ENCODE measurements at regions of chr2 and their contacts with region 1.

Region 1: DNA sequence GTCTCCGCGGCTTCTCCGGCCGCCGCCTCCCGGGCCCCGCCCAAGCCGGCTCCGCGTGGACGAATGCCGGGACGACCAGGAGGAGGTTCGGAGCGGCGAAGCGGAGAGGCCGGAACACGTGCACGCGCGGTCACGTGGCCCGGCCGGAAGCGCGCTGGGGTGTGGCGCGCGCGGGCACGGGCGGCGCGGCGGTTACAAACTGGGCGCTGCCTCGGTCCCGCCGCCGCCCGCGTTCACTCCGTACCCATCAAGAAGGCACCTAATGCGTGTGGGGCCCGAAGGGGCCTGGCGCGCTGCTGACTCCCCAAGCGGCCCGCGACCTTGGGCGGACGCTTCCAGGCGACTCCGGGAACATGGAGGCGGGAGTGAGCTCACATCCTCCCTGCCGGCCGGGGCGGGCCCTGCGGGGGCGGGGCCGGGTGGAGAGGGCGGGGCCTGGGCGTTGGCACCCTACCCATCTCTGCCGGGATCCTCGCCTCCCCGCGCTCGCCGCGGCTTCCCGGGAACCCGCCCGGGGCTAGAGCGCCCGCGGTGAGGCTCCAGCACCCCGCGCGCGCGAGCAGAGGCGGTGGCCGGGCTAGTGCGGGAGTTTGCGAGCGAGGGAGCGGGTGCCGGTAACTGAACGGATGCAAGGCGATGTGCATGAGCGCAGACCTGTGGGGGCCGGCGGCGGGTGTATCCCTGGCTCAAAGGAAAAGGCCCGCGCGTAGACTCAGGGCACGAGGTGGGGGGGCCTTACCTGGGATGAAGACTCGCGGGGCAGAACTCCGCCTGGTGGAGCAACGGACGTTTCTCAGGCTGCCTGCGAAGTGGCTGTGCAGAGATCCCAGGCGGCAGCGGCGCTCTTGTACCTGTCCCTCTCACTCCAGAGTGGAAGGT is at the start of gene TMEM185B:
- DNase-seq: peak; percentile 59
- ATAC-seq: peak; percentile 81
- H3K4me3 ChIP-seq: peak within 1 kb of the TSS; percentile 61 to 81 (median 70)
- H3K27ac ChIP-seq: peak within 1 kb of the TSS; percentile 14
- H3K4me1 ChIP-seq: peaks cover 62% of the 10 kb centered on the region
- H3K27me3 ChIP-seq: peaks cover 14 to 38% of the 10 kb centered on the region in 2 experiments; a peak in 4 of 5 replicates
- CTCF ChIP-seq: peak; percentile 71
- EP300 ChIP-seq: no peak
- POLR2A ChIP-seq: peak; percentile 61 to 69; a peak in 3 of 4 replicates
- RAD21 ChIP-seq: peak; percentile 74
- total RNA-seq, gene TMEM185B: 3.5 and 7.0 TPM in 2 replicates

Region 2: DNA sequence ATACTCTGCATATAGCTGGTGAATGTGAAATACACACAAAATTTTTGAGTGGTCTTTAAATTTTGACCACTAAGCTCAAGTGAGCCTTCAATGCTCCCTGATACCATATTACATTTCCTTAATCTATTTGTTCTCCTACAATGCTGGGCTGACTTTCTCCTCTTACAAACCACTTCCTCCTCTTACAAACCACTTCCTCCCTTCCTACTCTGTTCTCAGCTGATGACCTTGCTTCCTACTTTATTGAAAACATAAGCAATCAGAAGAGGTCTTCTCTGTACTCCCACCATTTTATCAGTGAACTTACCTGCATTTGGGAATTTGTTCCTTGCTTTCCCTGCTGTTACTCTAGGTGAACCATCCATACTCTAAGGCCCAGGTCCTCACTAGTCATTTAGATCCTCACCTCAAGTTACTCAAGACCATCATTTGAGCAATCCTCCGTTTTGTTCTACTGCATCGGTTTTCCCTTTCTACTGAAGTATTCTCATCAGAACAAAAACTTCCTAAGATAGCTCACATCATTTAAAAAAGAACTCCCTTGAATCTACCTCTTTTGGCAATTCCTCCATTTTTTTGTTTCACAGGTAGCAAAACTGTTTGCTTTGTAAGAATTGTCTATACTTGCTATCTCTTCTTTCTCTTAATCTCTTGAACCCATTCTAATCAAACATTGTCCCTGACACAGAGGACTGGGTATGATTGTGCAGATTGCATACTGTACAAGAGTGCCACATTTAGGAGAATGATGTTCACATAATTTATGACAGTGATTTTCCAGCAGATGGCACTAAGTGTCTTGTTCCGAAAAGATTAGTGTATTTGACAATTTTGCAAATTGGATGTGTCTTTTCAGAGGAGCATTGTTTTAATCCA is 113.8 kb before region 1 on chr2:
- CTCF ChIA-PET with region 1: no interaction called
- POLR2A ChIA-PET with region 1: no interaction called
- in situ Hi-C with region 1: no loop called
- intact Hi-C with region 1: loop called (anchors 1 kb)
- DNase-seq: peak; percentile 55
- ATAC-seq: peak; percentile 83
- H3K4me3 ChIP-seq: no peak overlapping the region
- H3K27ac ChIP-seq: no peak overlapping the region
- H3K4me1 ChIP-seq: peaks cover 6% of the 10 kb centered on the region; the same call in 1 of the 2 replicates
- H3K27me3 ChIP-seq: no peaks in the 10 kb centered on the region
- CTCF ChIP-seq: peak; percentile 73
- EP300 ChIP-seq: no peak
- POLR2A ChIP-seq: no peak
- RAD21 ChIP-seq: peak; percentile 37; the same call in 1 of the 2 replicates

Region 3: DNA sequence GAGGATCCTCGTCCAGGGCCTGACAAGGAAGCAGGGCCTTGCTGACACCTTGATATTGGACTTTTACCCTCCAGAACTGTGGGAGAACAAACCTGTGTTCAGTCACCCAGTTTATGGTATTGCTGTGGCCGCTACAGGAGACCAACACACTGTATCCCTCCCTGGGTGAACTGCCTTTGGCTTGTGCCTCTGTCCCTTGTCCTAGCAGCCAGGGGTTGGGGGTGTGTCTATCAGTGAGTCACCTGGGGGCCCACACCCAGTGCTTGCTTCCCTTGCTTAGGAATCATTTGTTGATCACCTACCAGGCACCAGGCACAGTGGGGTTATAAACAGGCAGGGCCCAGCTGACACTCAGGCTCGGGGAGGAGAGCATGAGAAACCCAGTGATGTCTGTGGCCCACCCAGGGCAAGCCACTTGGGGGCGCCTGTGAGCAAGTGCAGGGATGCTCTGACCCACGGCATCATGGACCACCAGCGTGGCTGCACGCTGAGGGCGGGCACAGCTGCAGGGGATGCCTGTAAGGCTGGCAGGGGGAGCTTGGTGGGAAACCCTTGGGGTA is 17.2 kb before region 1 on chr2:
- CTCF ChIA-PET with region 1: no interaction called
- POLR2A ChIA-PET with region 1: no interaction called
- in situ Hi-C with region 1: no loop called
- intact Hi-C with region 1: loop called (anchors 2 kb)
- DNase-seq: no peak
- ATAC-seq: peak; percentile 40
- H3K4me3 ChIP-seq: no peak overlapping the region
- H3K27ac ChIP-seq: no peak overlapping the region
- H3K4me1 ChIP-seq: peaks cover 25% of the 10 kb centered on the region
- H3K27me3 ChIP-seq: peaks cover 2 to 26% of the 10 kb centered on the region in 2 experiments; a peak in 3 of 5 replicates
- CTCF ChIP-seq: peak; percentile 86
- EP300 ChIP-seq: no peak
- POLR2A ChIP-seq: no peak
- RAD21 ChIP-seq: peak; percentile 31; the same call in 1 of the 2 replicates

Measured in HepG2 (cell line).